ENCODE measurements at regions of chr2 and their contacts with region 1.

Region 1: DNA sequence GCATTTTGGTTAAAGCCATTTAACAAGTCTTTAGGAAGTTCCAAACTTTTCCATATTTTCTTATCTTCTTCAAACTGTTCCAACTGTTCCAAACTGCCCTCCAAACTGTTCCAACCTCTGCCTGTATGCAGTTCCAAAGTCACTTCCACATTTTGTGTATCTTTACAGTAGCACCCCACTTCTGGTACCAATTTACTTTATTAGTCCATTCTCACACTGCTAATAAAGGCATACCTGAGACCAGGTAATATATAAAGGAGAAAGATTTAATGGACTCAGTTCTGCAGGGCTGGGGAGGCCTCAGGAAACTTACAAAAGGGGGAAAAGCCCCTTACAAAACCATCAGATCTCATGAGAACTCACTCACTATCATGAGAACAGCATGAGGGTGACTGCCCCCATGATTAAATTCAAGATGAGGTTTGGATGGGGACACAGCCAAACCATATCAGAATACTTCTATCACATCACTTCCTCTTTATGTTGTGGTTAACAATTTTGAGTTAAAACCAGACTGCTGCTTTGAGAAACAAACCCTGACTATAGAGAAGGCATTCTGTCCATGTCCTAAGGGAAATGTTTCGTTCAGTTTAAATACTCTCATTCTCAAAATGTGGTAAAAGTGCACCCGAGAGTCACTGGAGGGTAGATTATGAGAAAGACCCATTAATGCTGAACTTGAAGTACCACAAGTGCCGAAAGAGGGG is 11.0 kb downstream of the IL18R1 start:
- DNase-seq: peak; percentile 35
- ATAC-seq: peak; percentile 54
- H3K4me3 Mint-ChIP-seq: peak overlapping the region; percentile 55
- H3K27ac Mint-ChIP-seq: peak overlapping the region; percentile 93
- H3K4me1 Mint-ChIP-seq: peaks cover 73% of the 10 kb centered on the region
- H3K27me3 Mint-ChIP-seq: no peaks in the 10 kb centered on the region

Region 2: GRCh38 chr2:102020596-102021181 is 345.9 kb before region 1 on chr2:
- CTCF ChIA-PET with region 1: no interaction called
- POLR2A ChIA-PET with region 1: no interaction called
- intact Hi-C with region 1: loop called in 1 of 2 experiments (anchors 5 kb)
- DNase-seq: peak; percentile 92
- ATAC-seq: peak; percentile 84
- H3K4me3 Mint-ChIP-seq: no peak overlapping the region
- H3K27ac Mint-ChIP-seq: peak overlapping the region; percentile 68
- H3K4me1 Mint-ChIP-seq: peaks cover 53% of the 10 kb centered on the region
- H3K27me3 Mint-ChIP-seq: peaks cover 2% of the 10 kb centered on the region

Region 3: DNA sequence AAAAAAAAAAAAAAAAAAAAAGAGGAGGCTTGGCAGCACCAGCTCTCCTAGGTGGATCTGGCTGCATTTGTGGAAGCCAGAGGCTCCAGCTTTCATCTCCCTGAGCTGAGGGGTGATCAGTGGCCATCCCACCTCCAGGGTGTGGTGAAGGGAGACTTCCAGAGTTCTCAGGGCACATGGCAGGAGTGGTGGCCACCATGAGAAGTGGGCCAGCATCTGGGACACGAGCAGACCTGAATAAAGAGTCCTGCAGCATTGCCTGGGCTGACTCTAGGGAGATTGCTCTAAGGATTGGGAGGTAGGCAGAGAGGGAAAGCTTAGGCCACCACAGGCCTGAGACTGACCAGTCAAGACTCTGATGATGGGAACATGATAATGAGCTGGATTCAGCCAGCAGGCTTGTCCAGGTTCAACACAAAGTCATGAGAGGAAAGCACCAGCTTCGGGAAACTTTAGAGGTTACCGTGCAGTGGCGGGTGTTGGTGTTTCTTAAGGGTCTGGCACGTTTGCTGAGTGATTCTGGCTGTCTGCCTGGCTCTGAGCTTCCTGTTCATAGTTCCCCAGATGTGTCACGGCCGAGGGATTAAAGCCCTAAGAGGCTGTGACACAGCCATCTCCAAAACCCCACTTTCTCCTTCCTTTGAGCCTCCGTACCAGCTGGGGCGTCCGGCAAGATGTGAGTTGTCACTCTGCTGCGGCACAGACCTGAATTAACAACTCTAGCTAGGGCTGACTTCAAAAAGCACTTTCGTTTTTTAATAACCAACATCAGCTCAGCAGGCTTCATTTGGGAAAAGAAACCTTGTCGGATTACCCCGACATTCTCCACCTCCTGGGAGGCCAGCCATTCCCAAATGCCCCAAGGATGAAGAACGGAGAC is 262.3 kb before region 1 on chr2:
- CTCF ChIA-PET with region 1: no interaction called
- POLR2A ChIA-PET with region 1: no interaction called
- intact Hi-C with region 1: loop called in 1 of 2 experiments (anchors 5 kb)
- DNase-seq: peak; percentile 92
- ATAC-seq: peak; percentile 78
- H3K4me3 Mint-ChIP-seq: peak overlapping the region; percentile 80
- H3K27ac Mint-ChIP-seq: peak overlapping the region; percentile 84
- H3K4me1 Mint-ChIP-seq: peaks cover 59% of the 10 kb centered on the region
- H3K27me3 Mint-ChIP-seq: peaks cover 11% of the 10 kb centered on the region

Region 4: DNA sequence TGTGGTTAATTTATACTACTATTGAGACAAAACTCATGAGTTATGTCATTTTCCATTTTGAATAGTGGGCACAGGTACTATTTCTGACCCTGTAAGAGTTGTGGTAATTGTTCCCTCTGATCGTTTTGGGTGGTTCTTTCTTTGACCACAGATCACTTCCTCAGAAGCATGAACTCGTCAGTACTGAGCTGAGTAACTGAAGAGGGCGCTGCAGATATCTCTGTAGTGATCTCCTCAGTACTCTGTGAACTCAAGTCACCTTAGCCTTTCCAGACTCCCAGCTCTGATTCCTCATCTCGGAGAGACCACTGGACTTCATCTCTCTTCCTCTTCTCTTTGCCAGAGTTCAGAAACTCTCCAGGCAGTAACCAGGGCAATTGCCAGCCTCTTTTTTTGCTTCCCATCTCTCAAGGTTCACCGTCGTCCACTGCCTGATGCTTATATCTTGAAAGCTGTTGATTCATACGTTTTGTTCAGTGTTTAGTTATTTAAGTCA is 64.6 kb before region 1 on chr2:
- CTCF ChIA-PET with region 1: no interaction called
- POLR2A ChIA-PET with region 1: interaction called, 3 read pairs
- intact Hi-C with region 1: loop called in 1 of 2 experiments (anchors 1 kb)
- DNase-seq: peak; percentile 66
- ATAC-seq: peak; percentile 88
- H3K4me3 Mint-ChIP-seq: peak overlapping the region; percentile 17
- H3K27ac Mint-ChIP-seq: peak overlapping the region; percentile 58
- H3K4me1 Mint-ChIP-seq: peaks cover 46% of the 10 kb centered on the region
- H3K27me3 Mint-ChIP-seq: peaks cover 3% of the 10 kb centered on the region

Region 5: DNA sequence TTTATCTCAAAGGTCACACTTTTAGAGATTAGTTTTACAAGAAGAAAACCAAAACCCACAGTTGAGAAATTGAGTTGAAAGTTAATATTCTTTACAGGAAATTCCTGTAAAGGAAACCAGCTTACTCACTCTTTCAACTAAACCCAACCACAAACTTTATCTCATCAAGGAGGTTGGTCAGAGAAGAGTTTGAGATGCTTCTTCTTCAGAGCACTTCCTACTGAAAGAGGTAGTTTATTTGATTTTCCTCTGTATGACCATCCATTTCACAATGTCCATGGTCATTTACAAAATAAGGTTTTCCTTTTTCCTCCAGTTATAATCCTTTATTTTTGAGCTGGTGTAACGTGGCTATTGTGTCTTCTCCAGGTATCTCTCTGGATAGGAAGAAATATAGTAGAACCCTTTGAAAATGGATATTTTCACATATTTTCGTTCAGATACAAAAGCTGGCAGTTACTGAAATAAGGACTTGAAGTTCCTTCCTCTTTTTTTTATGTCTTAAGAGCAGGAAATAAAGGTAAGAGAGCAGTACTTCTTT is 51.9 kb after region 1 on chr2:
- CTCF ChIA-PET with region 1: interaction called, 3 read pairs
- POLR2A ChIA-PET with region 1: no interaction called
- intact Hi-C with region 1: loop called (anchors 1 kb)
- DNase-seq: no peak
- ATAC-seq: peak; percentile 61
- H3K4me3 Mint-ChIP-seq: peak overlapping the region; percentile 70
- H3K27ac Mint-ChIP-seq: peak overlapping the region; percentile 90
- H3K4me1 Mint-ChIP-seq: peaks cover 57% of the 10 kb centered on the region
- H3K27me3 Mint-ChIP-seq: peaks cover 7% of the 10 kb centered on the region

Region 6: GRCh38 chr2:102677244-102678215 is 311.0 kb after region 1 on chr2:
- CTCF ChIA-PET with region 1: no interaction called
- POLR2A ChIA-PET with region 1: no interaction called
- intact Hi-C with region 1: no loop called
- DNase-seq: no peak
- ATAC-seq: no peak
- H3K4me3 Mint-ChIP-seq: no peak overlapping the region
- H3K27ac Mint-ChIP-seq: no peak overlapping the region
- H3K4me1 Mint-ChIP-seq: no peaks in the 10 kb centered on the region
- H3K27me3 Mint-ChIP-seq: no peaks in the 10 kb centered on the region